ENCODE measurements at regions of chr20 and their contacts with region 1.

Region 1: DNA sequence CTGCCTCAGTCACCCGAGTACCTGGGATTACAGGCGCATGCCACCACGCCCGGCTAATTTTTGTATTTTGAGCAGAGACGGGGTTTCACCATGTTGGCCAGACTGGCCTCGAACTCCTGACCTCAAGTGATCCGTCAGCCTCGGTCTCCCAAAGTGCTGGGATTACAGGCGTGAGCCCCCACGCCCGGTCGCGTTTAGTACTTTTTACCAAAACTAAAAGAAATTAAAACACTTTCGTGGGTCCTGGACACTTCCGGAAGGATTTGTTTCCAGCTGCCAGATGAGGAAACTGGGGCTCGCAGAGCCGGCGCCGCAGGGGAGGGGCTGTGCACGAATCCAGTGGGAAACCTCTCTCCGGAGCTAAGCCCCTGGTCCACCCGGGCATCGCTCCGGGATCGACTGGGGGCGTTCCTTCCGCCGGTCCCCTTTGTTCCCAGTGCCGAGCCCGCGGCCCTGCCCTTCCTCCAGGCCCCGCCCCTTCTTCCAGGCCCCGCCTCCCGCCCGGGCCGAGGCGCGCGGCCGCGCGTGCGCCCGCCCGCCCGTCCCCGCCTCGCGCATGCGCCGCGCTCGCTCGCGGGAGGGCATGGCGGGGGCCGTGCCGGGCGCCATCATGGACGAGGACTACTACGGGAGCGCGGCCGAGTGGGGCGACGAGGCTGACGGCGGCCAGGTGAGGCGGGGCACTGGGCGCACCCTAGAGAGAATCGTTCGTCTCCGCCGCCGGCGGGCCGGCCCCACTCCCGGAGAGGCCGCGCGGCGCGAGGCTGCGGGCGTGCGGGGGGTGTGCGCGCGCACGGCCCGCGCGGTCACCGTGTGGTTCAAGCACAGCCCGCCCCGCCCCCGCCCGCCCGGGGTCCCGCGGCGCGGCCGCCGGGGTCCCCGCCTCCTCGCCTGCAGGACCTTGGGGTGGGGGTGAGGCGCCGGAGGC is at the start of gene NELFCD:
- DNase-seq: peak; percentile 86 to 96 (median 92)
- H3K4me3 ChIP-seq: peak within 1 kb of the TSS; percentile 54
- H3K27ac ChIP-seq: peak within 1 kb of the TSS; percentile 80 to 82
- H3K4me1 ChIP-seq: peaks cover 11% of the 10 kb centered on the region
- H3K27me3 ChIP-seq: no peaks in the 10 kb centered on the region
- CTCF ChIP-seq: no peak
- EP300 ChIP-seq: no peak
- POLR2A ChIP-seq: peak; percentile 47
- total RNA-seq, gene NELFCD: 36.7 to 67.8 (median 59.4) TPM

Region 2: DNA sequence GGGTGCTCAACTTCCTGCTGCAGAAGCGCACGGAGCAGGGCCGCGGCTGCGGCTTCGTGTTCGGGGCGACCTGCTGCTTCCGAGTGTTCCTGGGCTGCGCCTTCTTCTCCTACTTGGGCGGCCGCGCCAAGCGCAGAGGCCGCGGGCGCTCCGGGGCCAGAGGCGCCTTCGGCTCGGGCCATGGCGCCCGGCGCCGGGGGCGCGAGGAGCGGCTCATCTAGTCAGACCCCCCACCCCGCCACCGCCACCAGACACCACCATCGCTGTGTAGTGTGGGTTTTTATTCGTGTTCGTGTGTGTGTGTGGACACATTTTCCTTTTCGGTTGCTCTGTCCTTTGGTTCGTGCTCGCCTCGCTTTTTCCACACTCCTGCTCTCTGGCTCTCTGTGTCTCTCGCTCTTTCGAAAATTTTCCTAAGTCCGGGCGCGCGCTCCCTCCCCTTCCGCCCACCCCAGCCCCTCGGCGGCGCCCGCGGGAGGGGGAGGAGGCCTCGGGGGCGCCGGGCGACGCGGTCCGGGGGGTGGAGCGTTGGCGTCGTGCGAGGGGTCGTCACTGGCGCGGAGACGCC is 90.4 kb before region 1 on chr20:
- intact Hi-C with region 1: loop called in 2 of 4 experiments (anchors 5 kb)
- DNase-seq: peak; percentile 86 to 91 (median 88)
- H3K4me3 ChIP-seq: peak overlapping the region; percentile 83
- H3K27ac ChIP-seq: peak overlapping the region; percentile 96 to 98
- H3K4me1 ChIP-seq: peaks cover 4% of the 10 kb centered on the region
- H3K27me3 ChIP-seq: no peaks in the 10 kb centered on the region
- CTCF ChIP-seq: no peak
- EP300 ChIP-seq: no peak
- POLR2A ChIP-seq: no peak

Region 3: DNA sequence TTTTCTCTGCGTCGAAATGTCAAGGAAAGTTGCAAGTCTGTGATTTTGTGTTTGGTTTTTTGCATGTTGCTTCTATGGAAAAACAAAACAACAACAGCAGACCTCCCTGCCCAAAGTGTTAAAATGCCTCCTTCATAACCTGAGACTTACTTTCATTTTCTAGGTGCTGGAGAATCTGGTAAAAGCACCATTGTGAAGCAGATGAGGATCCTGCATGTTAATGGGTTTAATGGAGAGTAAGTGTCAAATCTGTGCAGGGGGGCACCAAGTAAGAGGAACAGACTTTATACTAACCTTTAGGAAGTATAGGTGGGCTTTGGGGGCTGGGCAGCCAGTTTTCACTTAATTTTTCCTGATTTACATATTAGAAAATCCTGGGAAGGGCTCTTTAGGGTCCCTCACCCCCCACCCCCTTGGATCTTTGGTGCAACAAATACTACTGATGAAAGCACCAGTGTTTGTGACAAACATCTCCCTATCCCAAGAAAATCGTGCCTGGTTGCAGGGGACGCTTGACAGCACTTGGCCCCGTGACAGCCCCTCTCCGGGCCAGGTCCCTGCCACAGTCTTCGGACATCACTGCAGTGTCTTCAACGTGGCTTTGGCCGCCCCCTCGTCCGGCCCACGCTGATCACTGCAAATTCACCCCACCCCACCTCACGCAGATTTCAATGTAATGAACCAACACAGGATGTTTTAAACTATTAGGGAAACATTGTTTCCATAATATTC is 85.3 kb before region 1 on chr20:
- intact Hi-C with region 1: loop called in 2 of 4 experiments (anchors 5 kb)
- DNase-seq: no peak
- H3K4me3 ChIP-seq: no peak overlapping the region
- H3K27ac ChIP-seq: no peak overlapping the region
- H3K4me1 ChIP-seq: peaks cover 11% of the 10 kb centered on the region
- H3K27me3 ChIP-seq: no peaks in the 10 kb centered on the region
- CTCF ChIP-seq: no peak
- EP300 ChIP-seq: no peak
- POLR2A ChIP-seq: no peak

Region 4: DNA sequence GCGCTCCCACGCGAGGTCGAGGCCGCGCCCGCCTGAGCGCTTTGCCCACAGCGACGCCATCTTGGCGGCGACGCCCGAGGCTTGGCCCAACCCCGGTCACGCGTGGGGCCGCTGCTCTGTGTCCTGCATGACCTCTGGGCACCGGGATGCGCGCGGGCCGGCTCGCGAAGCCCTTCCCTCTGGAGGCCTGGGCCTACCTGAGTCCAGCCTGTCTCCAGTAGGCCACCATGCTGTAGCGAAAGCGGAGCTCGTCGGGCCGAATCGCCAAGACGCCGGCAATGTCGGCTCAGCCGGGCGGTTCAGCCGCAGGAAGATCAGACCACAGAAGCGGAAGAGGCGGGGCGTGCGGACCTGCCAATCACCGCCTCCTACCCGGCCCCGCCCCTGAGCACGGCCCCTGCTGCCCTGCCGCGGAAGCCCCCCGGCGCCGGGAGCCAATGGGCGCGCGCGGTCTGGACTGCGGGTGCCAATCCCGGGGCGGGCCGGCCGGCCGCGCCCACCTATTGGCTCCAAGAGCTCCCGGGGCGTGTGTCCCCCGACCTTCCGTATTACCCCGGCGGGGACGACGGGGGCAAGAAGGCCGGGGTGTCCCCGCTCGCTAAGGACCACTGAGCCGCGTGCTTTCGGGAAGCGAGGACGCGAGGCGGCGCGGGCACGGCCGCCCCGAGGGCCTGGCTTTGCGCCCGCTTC is 51.2 kb after region 1 on chr20 and contains the start of gene ATP5F1E:
- intact Hi-C with region 1: loop called in 1 of 4 experiments (anchors 2 kb)
- DNase-seq: peak; percentile 94 to 98 (median 95)
- H3K4me3 ChIP-seq: peak within 1 kb of the TSS; percentile 86
- H3K27ac ChIP-seq: peak within 1 kb of the TSS; percentile 68 to 70
- H3K4me1 ChIP-seq: peaks cover 6% of the 10 kb centered on the region
- H3K27me3 ChIP-seq: no peaks in the 10 kb centered on the region
- CTCF ChIP-seq: no peak
- EP300 ChIP-seq: no peak
- POLR2A ChIP-seq: peak; percentile 67
- total RNA-seq, gene ATP5F1E: 23.2 to 50.4 (median 45.4) TPM

Region 5: DNA sequence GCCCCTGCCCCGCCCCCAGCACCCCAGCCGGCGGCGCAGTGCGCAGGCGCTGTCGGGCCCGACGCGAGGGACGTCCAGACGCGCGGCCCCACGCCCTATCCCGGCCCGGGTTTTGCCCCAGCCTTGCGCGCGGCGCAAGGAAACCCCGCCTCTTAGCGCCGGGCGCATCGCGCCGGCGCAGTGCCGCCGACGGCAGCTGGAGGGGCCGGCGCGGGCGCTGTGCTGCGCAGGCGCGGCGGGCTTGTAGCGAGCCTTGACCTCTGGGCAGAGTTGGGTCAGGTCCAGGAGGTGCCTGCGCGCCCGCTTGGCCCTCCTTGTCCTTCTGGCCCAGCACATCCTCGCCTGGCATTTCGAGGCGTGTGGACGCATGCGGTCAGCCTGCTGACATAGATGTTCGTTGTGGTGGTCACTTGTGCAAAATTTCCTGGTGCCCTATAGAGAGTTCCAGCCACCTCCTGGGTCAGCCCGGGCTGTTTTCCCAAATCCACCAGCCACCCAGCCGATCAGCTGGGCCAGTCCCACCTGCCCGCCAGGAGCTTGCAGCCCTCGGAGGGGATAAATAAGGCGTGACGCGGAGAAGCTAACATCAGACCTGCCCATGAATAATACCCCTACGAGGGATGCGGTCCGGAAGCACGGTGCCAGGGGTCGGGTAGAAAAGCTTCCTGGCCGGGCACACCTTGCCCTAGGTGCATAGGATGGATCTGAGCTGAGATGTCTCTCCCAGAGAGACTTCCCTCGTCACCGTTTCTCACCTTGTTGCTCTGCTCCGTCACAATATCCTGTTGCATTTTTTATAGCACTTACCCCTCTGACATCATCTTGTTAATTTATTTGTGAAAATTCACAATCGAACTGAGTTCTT is 62.1 kb after region 1 on chr20:
- intact Hi-C with region 1: loop called in 1 of 4 experiments (anchors 5 kb)
- DNase-seq: peak; percentile 90 to 96 (median 93)
- H3K4me3 ChIP-seq: peak overlapping the region; percentile 94
- H3K27ac ChIP-seq: peak overlapping the region in 1 of 2 donors; percentile 69
- H3K4me1 ChIP-seq: peaks cover 8% of the 10 kb centered on the region
- H3K27me3 ChIP-seq: no peaks in the 10 kb centered on the region
- CTCF ChIP-seq: peak in 1 of 3 donors; percentile 7
- EP300 ChIP-seq: no peak
- POLR2A ChIP-seq: no peak

Measured in ovary (tissue), 10 donors.